GM12878 (cell line): ENCODE measurements at regions of chr17 and their contacts with region 1.

Region 1: DNA sequence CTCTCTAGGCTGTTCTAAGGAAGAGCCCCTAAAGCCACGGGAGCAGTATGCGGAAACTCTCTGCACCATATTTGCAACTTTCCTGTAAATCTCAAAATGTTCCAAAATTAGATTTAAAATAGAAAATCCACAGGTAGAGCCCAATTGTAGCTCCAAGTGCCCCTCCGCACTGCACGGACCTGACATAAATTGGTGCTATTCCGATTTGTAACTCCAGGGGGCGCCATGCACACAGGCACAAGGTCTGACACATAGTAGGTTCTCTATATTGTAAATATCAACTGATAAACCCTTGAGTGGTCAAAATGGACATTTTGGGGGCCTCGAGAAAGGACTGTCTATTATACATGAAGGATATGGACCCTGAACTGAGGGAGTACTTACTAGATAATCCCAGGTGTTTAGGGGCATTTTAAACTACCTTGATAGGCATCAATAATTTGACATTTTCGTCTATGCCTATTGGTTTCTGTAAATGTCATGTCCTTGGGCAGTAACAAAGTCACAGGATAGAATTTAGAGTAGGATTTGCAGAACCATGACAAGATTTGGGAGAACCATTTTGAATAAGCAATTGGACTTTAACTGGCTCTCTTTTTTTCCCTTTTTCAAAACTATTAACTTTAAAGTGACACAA is 36.6 kb upstream of the TMEM132E start:
- DNase-seq: no peak
- ATAC-seq: peak; percentile 68
- H3K4me3 ChIP-seq: no peak overlapping the region
- H3K27ac ChIP-seq: no peak overlapping the region
- H3K4me1 ChIP-seq: no peaks in the 10 kb centered on the region
- H3K27me3 ChIP-seq: no peaks in the 10 kb centered on the region; a peak in 1 of 4 replicates
- CTCF ChIP-seq: peak; percentile 72 to 91 (median 86)
- EP300 ChIP-seq: no peak
- POLR2A ChIP-seq: no peak
- RAD21 ChIP-seq: peak; percentile 81

Region 2: DNA sequence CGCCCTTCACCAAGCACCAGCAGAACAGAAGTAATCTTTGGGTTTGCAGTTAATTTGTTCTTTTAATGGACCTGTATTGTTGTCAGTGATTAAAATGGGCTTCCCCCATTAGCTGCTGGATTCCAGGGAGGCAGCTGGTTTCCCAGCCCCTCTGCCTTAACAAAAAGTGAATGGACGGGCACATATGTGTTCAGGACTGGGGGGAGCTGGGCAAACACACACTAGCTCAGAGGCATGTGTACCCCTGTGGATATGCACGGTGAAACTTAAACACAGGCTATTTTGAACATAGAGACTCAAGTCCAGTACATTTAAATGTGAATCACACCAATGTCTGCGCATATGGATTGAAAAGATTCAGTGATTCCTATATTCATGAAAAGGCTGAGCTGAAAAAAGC is 11.1 kb after region 1 on chr17:
- CTCF ChIA-PET with region 1: interaction called, 19 read pairs
- POLR2A ChIA-PET with region 1: no interaction called
- RAD21 ChIA-PET with region 1: interaction called, 5 read pairs
- SMC1A ChIA-PET with region 1: interaction called, 3 read pairs
- in situ Hi-C with region 1: no loop called
- intact Hi-C with region 1: no loop called
- DNase-seq: no peak
- ATAC-seq: no peak
- H3K4me3 ChIP-seq: no peak overlapping the region
- H3K27ac ChIP-seq: no peak overlapping the region
- H3K4me1 ChIP-seq: no peaks in the 10 kb centered on the region
- H3K27me3 ChIP-seq: peaks cover 3% of the 10 kb centered on the region in 2 experiments
- CTCF ChIP-seq: no peak
- EP300 ChIP-seq: no peak
- POLR2A ChIP-seq: no peak
- RAD21 ChIP-seq: no peak

Region 3: DNA sequence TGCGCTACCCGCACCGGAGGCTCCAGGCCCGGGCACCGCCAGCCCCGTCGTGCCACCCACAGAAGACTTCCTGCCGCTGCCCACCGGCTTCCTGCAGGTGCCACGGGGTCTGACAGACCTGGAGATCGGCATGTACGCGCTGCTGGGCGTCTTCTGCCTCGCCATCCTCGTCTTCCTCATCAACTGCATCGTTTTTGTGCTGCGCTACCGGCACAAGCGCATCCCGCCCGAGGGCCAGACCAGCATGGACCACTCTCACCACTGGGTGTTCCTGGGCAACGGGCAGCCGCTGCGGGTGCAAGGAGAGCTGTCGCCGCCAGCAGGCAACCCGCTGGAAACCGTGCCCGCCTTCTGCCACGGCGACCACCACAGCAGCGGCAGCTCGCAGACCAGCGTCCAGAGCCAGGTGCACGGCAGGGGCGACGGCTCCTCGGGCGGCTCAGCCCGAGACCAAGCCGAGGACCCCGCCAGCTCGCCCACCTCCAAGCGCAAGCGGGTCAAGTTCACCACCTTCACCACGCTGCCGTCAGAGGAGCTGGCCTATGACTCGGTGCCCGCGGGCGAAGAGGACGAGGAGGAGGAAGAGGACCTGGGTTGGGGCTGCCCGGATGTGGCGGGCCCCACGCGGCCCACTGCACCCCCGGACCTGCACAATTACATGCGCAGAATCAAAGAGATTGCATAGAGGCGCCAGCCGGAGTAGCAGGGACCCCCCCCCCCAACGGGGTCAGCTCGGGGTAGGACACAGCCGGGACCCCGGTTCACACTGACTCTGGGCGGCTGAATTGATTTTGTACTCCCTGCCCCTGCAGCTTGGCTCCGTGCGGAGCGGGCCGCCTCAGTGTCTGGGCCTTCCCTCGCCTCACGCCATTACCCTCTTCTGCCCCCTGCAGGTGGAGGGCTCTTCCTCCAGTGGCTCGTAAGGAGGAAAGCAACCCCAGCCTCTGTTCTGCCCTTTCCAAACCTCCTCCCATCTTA is 95.0 kb after region 1 on chr17:
- CTCF ChIA-PET with region 1: interaction called, 4 read pairs
- POLR2A ChIA-PET with region 1: no interaction called
- RAD21 ChIA-PET with region 1: no interaction called
- SMC1A ChIA-PET with region 1: no interaction called
- in situ Hi-C with region 1: no loop called
- intact Hi-C with region 1: loop called (anchors 1 kb)
- DNase-seq: no peak
- ATAC-seq: peak; percentile 100
- H3K4me3 ChIP-seq: no peak overlapping the region
- H3K27ac ChIP-seq: no peak overlapping the region
- H3K4me1 ChIP-seq: no peaks in the 10 kb centered on the region
- H3K27me3 ChIP-seq: peaks cover 3 to 10% of the 10 kb centered on the region in 2 experiments; a peak in 3 of 4 replicates
- CTCF ChIP-seq: peak; percentile 78 to 86 (median 84)
- EP300 ChIP-seq: no peak
- POLR2A ChIP-seq: no peak
- RAD21 ChIP-seq: peak; percentile 53

Region 4: GRCh38 chr17:34892461-34893249 is 349.8 kb after region 1 on chr17:
- CTCF ChIA-PET with region 1: interaction called, 4 read pairs
- POLR2A ChIA-PET with region 1: no interaction called
- RAD21 ChIA-PET with region 1: no interaction called
- SMC1A ChIA-PET with region 1: no interaction called
- in situ Hi-C with region 1: no loop called
- intact Hi-C with region 1: loop called (anchors 10 kb)
- DNase-seq: no peak
- ATAC-seq: peak; percentile 30; the same call in 1 of the 3 replicates
- H3K4me3 ChIP-seq: no peak overlapping the region
- H3K27ac ChIP-seq: no peak overlapping the region
- H3K4me1 ChIP-seq: no peaks in the 10 kb centered on the region
- H3K27me3 ChIP-seq: peaks cover 2 to 6% of the 10 kb centered on the region in 2 experiments; a peak in 3 of 4 replicates
- CTCF ChIP-seq: peak; percentile 20 to 42 (median 24); a peak in 3 of 6 replicates
- EP300 ChIP-seq: no peak
- POLR2A ChIP-seq: no peak
- RAD21 ChIP-seq: peak; percentile 52

Region 5: DNA sequence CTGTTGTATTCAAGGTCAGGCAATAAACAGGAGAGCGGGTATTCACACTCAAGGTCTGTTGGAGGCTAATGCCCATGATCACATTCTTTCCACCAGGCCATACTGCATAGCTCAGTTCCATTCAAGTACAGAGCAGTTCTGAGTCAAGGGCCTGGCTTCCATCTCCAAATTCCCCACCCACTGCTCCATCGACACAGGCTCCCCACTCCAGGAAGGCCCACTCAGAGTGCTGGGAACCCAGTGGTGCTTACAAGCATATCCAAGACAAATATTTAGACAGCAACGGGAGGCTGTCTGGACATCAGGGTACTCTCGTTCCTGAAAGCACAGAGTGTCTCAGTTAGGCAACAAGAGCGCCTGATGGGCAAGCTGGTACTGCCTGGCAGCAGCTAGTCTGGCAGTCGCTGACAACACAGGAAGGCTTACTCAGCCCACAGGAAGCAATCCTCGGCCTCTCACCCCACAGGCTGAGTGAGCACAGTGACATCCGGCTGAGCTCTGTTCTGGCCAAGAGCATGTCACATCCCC is 479.8 kb after region 1 on chr17:
- CTCF ChIA-PET with region 1: no interaction called
- POLR2A ChIA-PET with region 1: no interaction called
- RAD21 ChIA-PET with region 1: no interaction called
- SMC1A ChIA-PET with region 1: no interaction called
- in situ Hi-C with region 1: no loop called
- intact Hi-C with region 1: no loop called
- DNase-seq: no peak
- ATAC-seq: peak; percentile 88
- H3K4me3 ChIP-seq: no peak overlapping the region
- H3K27ac ChIP-seq: peak overlapping the region; percentile 34
- H3K4me1 ChIP-seq: peaks cover 4% of the 10 kb centered on the region
- H3K27me3 ChIP-seq: no peaks in the 10 kb centered on the region
- CTCF ChIP-seq: no peak
- EP300 ChIP-seq: no peak
- POLR2A ChIP-seq: peak; percentile 61
- RAD21 ChIP-seq: no peak